Dendritic cell treated with granulocyte-macrophage colony-stimulating factor and Interleukin-4, amounts not matched to agents 40 ng/mL and 50 ng/mL, for 4 days (primary cell): ENCODE measurements at regions of chr1 and their contacts with region 1.

Region 1: GRCh38 chr1:17494114-17494729 is 45.3 kb upstream of the ARHGEF10L start:
- H3K4me3 Mint-ChIP-seq: no peak overlapping the region
- H3K27ac Mint-ChIP-seq: no peak overlapping the region
- H3K4me1 Mint-ChIP-seq: peaks cover 6% of the 10 kb centered on the region
- H3K27me3 Mint-ChIP-seq: peaks cover 25% of the 10 kb centered on the region

Region 2: GRCh38 chr1:17574516-17574915 is 80.3 kb after region 1 on chr1:
- intact Hi-C with region 1: no loop called
- H3K4me3 Mint-ChIP-seq: no peak overlapping the region
- H3K27ac Mint-ChIP-seq: no peak overlapping the region
- H3K4me1 Mint-ChIP-seq: peaks cover 24% of the 10 kb centered on the region
- H3K27me3 Mint-ChIP-seq: peaks cover 13% of the 10 kb centered on the region

Region 3: GRCh38 chr1:17606826-17607440 is 112.7 kb after region 1 on chr1:
- intact Hi-C with region 1: loop called (anchors 2 kb)
- H3K4me3 Mint-ChIP-seq: no peak overlapping the region
- H3K27ac Mint-ChIP-seq: no peak overlapping the region
- H3K4me1 Mint-ChIP-seq: peaks cover 8% of the 10 kb centered on the region
- H3K27me3 Mint-ChIP-seq: peaks cover 23% of the 10 kb centered on the region

Region 4: GRCh38 chr1:17826165-17826488 is 331.9 kb after region 1 on chr1:
- intact Hi-C with region 1: loop called (anchors 10 kb)
- H3K4me3 Mint-ChIP-seq: no peak overlapping the region
- H3K27ac Mint-ChIP-seq: no peak overlapping the region
- H3K4me1 Mint-ChIP-seq: no peaks in the 10 kb centered on the region
- H3K27me3 Mint-ChIP-seq: peaks cover 24% of the 10 kb centered on the region

Region 5: DNA sequence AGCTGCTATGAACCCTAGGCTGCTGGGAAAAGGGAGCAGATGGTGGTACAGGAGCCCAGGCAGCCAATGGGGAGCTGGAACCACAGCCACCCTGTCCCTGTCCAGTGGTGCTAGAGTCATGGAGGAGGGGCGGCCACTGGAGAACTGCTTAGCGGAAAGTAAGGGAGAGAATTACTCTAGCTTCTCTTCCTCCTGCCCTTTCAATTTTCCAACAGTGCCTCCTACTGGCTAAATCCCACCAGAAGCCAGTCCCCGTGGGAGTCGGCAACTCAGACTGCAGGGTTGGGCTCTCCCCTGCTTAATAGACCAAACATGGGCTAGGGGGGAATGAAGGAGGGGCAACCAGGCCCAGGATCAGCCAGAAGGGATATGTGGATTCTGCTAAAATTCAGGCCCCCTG is 415.4 kb after region 1 on chr1:
- intact Hi-C with region 1: loop called (anchors 5 kb)
- H3K4me3 Mint-ChIP-seq: no peak overlapping the region
- H3K27ac Mint-ChIP-seq: no peak overlapping the region
- H3K4me1 Mint-ChIP-seq: no peaks in the 10 kb centered on the region
- H3K27me3 Mint-ChIP-seq: peaks cover 16% of the 10 kb centered on the region

Region 6: GRCh38 chr1:18100491-18101063 is 606.4 kb after region 1 on chr1:
- intact Hi-C with region 1: loop called (anchors 10 kb)
- H3K4me3 Mint-ChIP-seq: no peak overlapping the region
- H3K27ac Mint-ChIP-seq: no peak overlapping the region
- H3K4me1 Mint-ChIP-seq: no peaks in the 10 kb centered on the region
- H3K27me3 Mint-ChIP-seq: peaks cover 30% of the 10 kb centered on the region